Activated CD4-positive, alpha-beta T cell treated with anti-CD3 and anti-CD28 coated beads, Interleukin-2, amount 10 ng/mL, durations not matched to agents 7 days and 5 days (primary cell): ENCODE measurements at regions of chr7 and their contacts with region 1.

Region 1: GRCh38 chr7:73738612-73739374 is at the start of gene ABHD11:
- DNase-seq: peak; percentile 97
- H3K4me3 Mint-ChIP-seq: peak within 1 kb of the TSS; percentile 93
- H3K27ac Mint-ChIP-seq: peak within 1 kb of the TSS; percentile 97
- H3K4me1 Mint-ChIP-seq: peaks cover 23% of the 10 kb centered on the region
- H3K27me3 Mint-ChIP-seq: no peaks in the 10 kb centered on the region
- total RNA-seq, gene ABHD11: 13.3 to 15.6 TPM

Region 2: DNA sequence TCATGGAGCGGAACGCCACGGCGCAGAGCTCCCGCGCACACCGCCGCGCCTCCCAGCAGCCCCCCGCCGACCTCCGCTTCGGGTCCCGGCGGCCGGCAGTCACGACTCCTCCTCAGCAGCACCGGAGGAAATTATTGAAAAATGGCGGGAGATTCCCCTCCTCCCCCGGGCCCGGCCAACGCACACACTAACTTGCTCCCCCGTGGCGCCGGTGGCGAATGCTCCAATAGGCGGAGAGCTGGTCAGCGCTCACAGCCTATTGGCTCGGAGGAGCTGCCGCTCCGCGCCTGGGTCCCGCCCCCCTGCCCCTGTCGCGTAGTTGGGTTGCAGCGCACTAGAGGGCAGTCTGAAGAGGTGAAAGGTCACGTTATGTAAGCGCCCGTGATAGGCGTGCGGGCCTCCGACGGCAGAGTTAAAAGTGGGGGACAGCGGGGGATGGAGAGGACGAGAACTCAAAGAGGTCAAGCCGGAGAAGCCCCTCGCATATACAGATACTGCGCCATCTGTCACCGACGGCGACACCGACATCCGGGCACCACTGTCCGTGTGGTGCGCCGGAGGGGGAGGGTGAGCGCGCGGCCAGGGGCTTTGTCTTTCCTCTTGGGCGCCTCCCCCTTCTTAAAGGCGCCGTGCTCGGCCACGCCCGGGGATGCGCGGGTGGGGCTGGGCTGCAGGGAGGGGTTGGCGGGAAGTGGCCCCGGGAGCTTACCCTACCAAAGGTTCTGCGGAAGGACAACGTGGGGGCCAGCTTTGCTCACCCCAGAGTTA is 216.5 kb before region 1 on chr7 and contains the start of gene BAZ1B:
- CTCF ChIA-PET with region 1: interaction called, 18 read pairs
- POLR2A ChIA-PET with region 1: no interaction called
- DNase-seq: peak; percentile 98
- H3K4me3 Mint-ChIP-seq: peak within 1 kb of the TSS; percentile 96
- H3K27ac Mint-ChIP-seq: peak within 1 kb of the TSS; percentile 99
- H3K4me1 Mint-ChIP-seq: peaks cover 57% of the 10 kb centered on the region
- H3K27me3 Mint-ChIP-seq: no peaks in the 10 kb centered on the region
- total RNA-seq, gene BAZ1B: 96.5 to 103 TPM

Region 3: DNA sequence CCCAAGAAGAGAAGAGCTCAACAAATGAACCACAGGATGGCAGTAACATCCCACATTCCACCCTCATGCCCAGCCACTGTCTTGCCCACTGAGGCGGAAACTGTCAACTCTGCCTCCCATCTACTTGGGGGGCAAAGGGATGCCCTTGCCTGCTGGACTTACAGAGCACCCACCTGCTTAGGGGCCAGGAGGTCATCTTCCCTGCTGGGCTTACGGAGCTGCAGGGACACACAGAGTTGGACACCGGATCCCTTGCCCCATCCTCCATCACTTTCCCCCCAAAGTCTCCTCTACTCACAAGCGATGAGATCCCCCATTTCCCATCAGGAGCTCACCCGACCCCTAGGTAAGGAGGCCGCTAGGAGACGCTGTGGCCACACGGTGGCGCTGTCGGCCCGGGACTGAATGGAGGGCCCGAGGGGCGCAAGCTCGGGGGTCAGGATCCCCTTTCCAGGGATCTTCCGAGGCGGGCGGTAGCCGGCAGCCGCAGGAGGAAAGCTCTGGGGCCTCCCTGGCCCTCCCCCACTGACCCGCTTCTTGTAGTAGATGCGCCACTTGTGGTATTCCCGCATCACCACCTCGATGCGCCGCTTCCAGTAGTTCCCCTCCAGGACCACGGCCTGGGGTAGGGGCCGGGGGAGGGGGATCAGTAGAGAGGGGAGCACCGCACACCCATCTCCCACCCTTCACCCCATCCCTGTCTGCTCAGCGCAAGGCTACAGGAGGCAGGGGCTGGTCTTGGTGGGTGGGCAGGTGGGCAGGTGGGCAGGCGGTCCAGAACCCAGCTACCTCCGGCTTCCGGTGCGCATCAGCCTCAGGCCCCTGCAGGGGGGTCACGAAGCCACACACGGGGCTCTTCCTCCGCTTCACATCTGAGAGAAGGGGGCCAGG is 131.7 kb before region 1 on chr7:
- CTCF ChIA-PET with region 1: interaction called, 59 read pairs
- POLR2A ChIA-PET with region 1: no interaction called
- DNase-seq: peak; percentile 63
- H3K4me3 Mint-ChIP-seq: no peak overlapping the region
- H3K27ac Mint-ChIP-seq: no peak overlapping the region
- H3K4me1 Mint-ChIP-seq: peaks cover 2% of the 10 kb centered on the region
- H3K27me3 Mint-ChIP-seq: peaks cover 11% of the 10 kb centered on the region

Region 4: GRCh38 chr7:73701357-73701995 is 37.3 kb before region 1 on chr7:
- CTCF ChIA-PET with region 1: interaction called, 12 read pairs
- POLR2A ChIA-PET with region 1: no interaction called
- DNase-seq: peak; percentile 29
- H3K4me3 Mint-ChIP-seq: no peak overlapping the region
- H3K27ac Mint-ChIP-seq: no peak overlapping the region
- H3K4me1 Mint-ChIP-seq: peaks cover 3% of the 10 kb centered on the region
- H3K27me3 Mint-ChIP-seq: no peaks in the 10 kb centered on the region

Region 5: DNA sequence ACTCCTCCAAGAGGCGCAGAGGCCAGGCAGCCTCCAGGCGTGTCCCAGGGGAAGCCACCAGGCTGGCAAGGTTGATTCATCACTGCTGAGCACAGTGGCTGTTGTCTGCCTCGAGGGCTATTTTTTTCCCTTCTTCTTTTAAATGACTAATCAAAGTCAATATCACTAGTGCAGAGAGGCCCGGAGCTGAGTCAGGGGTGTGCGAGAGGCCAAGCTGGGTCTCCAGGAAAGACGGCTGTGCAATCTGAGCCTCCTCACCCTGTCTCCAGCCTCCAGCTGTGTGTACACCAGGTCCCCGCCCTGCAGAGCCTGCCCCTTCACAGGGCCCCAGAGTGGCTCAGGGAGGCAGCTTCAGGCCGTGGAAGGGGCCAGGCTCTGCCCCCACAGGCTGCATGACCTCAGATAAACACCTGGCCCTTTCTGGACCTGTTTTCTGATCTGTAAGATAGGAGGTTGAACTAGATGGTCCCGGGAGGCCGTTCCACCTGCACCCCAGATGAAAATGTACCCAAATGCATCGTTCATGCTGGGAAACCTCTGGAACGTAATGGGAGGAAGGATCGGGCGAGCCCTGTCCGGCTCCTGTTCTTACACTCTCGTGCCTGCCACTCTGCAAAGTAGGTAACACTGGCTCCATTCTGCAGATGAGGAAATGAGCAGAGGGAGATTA is 23.0 kb before region 1 on chr7:
- CTCF ChIA-PET with region 1: interaction called, 10 read pairs
- POLR2A ChIA-PET with region 1: no interaction called
- DNase-seq: peak; percentile 8
- H3K4me3 Mint-ChIP-seq: no peak overlapping the region
- H3K27ac Mint-ChIP-seq: no peak overlapping the region
- H3K4me1 Mint-ChIP-seq: peaks cover 35% of the 10 kb centered on the region
- H3K27me3 Mint-ChIP-seq: peaks cover 14% of the 10 kb centered on the region

Region 6: DNA sequence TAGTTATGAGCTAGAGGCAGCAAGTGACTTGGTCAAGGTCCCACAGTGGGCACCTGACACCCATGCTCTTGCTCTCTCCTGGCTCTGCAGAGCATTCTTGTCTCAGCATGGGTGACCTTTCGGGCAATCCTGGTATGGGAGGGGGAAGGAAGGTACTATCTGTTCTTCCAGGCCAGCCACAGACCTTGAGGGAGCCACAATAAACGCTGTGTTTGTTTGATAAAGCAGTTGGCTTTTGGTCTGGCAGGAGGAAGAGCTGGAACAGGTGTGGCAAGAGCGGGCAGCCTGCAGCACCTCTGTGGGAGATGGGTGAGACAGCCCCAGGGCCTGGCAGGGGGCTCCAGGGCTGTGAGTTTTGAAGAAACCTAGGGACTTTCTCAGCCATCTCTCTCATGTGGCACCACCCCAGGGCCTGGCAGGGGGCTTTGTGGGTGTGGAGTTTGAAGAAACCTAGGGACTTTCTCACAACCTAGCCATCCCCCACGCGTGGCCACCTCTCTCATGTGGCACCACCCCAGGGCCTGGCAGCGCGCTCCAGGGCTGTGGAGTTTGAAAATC is 19.9 kb after region 1 on chr7:
- CTCF ChIA-PET with region 1: no interaction called
- POLR2A ChIA-PET with region 1: no interaction called
- DNase-seq: no peak
- H3K4me3 Mint-ChIP-seq: no peak overlapping the region
- H3K27ac Mint-ChIP-seq: no peak overlapping the region
- H3K4me1 Mint-ChIP-seq: no peaks in the 10 kb centered on the region
- H3K27me3 Mint-ChIP-seq: no peaks in the 10 kb centered on the region

Region 7: GRCh38 chr7:73833312-73833919 is 94.6 kb after region 1 on chr7:
- CTCF ChIA-PET with region 1: no interaction called
- POLR2A ChIA-PET with region 1: no interaction called
- DNase-seq: no peak
- H3K4me3 Mint-ChIP-seq: no peak overlapping the region
- H3K27ac Mint-ChIP-seq: no peak overlapping the region
- H3K4me1 Mint-ChIP-seq: peaks cover 9% of the 10 kb centered on the region
- H3K27me3 Mint-ChIP-seq: no peaks in the 10 kb centered on the region